Body of pancreas (tissue), 4 donors: ENCODE measurements at regions of chr2 and their contacts with region 1.

Region 1: GRCh38 chr2:23954325-23955014 is 14.2 kb downstream of the UBXN2A start:
- DNase-seq: no peak
- ATAC-seq: no peak
- H3K4me3 ChIP-seq: no peak overlapping the region
- H3K27ac ChIP-seq: no peak overlapping the region
- H3K4me1 ChIP-seq: no peaks in the 10 kb centered on the region
- H3K27me3 ChIP-seq: no peaks in the 10 kb centered on the region
- CTCF ChIP-seq: no peak
- POLR2A ChIP-seq: no peak

Region 2: DNA sequence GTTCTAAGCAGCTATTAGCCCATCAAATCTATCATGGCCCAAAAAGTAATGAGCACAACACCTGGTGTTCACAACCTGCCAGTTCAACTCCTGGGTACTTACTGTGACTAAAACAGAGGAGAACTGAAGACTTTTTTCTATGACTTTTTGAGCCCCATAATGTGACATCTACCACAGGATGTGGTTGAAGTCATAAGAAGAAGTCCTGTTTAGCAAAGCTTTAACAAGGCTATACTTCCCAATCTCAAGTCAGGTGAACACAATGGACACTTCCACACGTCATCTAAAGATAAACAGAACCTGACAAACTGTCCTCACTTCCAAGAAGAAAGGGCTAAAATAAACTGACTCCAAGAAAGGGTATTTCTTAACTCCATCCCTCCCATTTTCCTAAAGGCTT is 166.4 kb before region 1 on chr2:
- intact Hi-C with region 1: no loop called
- DNase-seq: no peak
- ATAC-seq: no peak
- H3K4me3 ChIP-seq: no peak overlapping the region
- H3K27ac ChIP-seq: no peak overlapping the region
- H3K4me1 ChIP-seq: peaks cover 7% of the 10 kb centered on the region
- H3K27me3 ChIP-seq: no peaks in the 10 kb centered on the region
- CTCF ChIP-seq: no peak
- POLR2A ChIP-seq: no peak

Region 3: GRCh38 chr2:24065341-24065740 is 110.9 kb after region 1 on chr2:
- intact Hi-C with region 1: loop called (anchors 10 kb)
- DNase-seq: no peak
- ATAC-seq: no peak
- H3K4me3 ChIP-seq: no peak overlapping the region
- H3K27ac ChIP-seq: no peak overlapping the region
- H3K4me1 ChIP-seq: no peaks in the 10 kb centered on the region
- H3K27me3 ChIP-seq: no peaks in the 10 kb centered on the region
- CTCF ChIP-seq: no peak
- POLR2A ChIP-seq: no peak

Region 4: DNA sequence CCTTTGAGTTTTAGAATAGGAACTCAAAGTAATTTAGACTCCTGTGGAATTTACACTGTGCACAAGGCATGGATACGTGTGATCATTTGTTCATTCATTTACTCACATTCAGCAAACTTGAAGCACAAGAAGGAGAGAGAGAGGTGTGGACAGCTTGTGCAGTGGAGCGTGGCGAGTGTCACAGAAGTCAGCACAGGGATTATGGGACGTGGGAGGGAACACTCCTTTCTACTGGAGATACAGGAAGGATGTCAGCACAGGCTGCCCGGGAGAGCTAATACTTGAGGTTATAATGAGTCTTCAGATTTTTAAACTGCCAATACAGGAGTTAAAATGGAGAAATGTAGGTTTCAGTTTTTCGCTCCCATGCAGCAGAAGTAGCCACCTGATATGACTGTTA is 227.4 kb after region 1 on chr2:
- intact Hi-C with region 1: no loop called
- DNase-seq: no peak
- ATAC-seq: no peak
- H3K4me3 ChIP-seq: no peak overlapping the region
- H3K27ac ChIP-seq: no peak overlapping the region
- H3K4me1 ChIP-seq: no peaks in the 10 kb centered on the region
- H3K27me3 ChIP-seq: no peaks in the 10 kb centered on the region
- CTCF ChIP-seq: no peak
- POLR2A ChIP-seq: no peak